Psoas muscle (tissue), 8 donors: ENCODE measurements at regions of chr9 and their contacts with region 1.

Region 1: GRCh38 chr9:74742792-74743730 is 144.7 kb downstream of the TRPM6 start:
- DNase-seq: no peak
- ATAC-seq: peak in 1 of 4 donors; percentile 25
- H3K4me3 ChIP-seq: no peak overlapping the region
- H3K27ac ChIP-seq: no peak overlapping the region
- H3K4me1 ChIP-seq: no peaks in the 10 kb centered on the region
- H3K27me3 ChIP-seq: peaks cover 0 to 3% (median 1%) of the 10 kb centered on the region in 3 donors
- CTCF ChIP-seq: peak; percentile 67

Region 2: GRCh38 chr9:73200694-73201452 is 1542.2 kb before region 1 on chr9:
- intact Hi-C with region 1: loop called in 1 of 2 experiments (anchors 5 kb)
- DNase-seq: no peak
- ATAC-seq: no peak
- H3K4me3 ChIP-seq: no peak overlapping the region
- H3K27ac ChIP-seq: no peak overlapping the region
- H3K4me1 ChIP-seq: no peaks in the 10 kb centered on the region
- H3K27me3 ChIP-seq: no peaks in the 10 kb centered on the region
- CTCF ChIP-seq: peak; percentile 41

Region 3: DNA sequence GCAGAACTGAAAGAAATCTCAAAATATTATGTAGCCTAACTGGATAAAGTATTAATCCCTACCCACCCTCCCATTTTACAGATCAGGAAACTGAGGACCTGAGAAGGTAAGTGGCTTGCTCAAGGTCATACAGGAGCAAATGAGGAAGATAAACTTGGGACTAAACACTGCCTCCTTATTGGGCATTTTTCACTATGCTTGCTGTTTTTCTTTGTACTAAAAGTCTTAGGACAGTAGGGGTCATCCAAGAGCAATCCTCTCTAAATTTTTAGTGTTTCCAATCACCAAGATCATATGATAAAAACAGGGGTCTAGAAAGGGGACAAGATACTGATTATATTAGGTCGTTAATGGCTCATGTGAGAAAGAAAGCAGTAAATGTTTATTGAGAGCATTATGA is 165.1 kb before region 1 on chr9:
- intact Hi-C with region 1: loop called in 1 of 2 experiments (anchors 5 kb)
- DNase-seq: no peak
- ATAC-seq: no peak
- H3K4me3 ChIP-seq: no peak overlapping the region
- H3K27ac ChIP-seq: no peak overlapping the region
- H3K4me1 ChIP-seq: no peaks in the 10 kb centered on the region
- H3K27me3 ChIP-seq: no peaks in the 10 kb centered on the region
- CTCF ChIP-seq: peak; percentile 16